Panc1 (cell line): ENCODE measurements at regions of chr3 and their contacts with region 1.

Region 1: DNA sequence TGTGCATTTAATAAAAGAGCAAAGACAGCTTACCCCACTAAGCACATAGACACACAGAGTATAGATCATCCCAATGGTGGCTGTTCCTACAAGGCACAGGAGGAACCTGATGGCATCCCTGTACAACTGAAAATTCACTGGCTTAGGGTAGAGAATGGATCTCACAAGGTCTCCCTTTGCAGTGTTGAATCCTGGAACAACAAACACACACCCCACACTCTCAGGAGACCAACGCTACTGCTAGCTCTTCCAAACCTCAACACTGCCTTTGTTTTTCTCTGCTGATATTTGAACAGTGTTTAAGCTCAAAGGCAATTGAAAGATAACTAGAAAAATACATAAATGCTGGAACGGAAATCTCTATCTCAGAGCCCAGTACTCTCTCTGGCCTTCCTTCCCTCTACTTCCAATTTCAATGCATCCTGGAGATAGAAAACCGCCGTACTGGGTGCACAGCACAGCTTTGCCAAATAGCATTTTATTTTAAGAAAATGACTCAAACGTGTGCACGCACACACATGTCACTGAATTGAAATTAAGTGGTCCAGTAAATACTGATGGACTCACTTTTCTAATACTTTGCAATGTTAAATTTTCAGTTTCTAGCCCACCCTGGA is 87.5 kb upstream of the ATP13A5 start:
- DNase-seq: no peak
- ATAC-seq: no peak
- H3K4me3 ChIP-seq: no peak overlapping the region
- H3K27ac ChIP-seq: no peak overlapping the region
- H3K4me1 ChIP-seq: no peaks in the 10 kb centered on the region
- H3K27me3 ChIP-seq: peaks cover 3% of the 10 kb centered on the region; the same call in 1 of the 2 replicates
- CTCF ChIP-seq: no peak

Region 2: DNA sequence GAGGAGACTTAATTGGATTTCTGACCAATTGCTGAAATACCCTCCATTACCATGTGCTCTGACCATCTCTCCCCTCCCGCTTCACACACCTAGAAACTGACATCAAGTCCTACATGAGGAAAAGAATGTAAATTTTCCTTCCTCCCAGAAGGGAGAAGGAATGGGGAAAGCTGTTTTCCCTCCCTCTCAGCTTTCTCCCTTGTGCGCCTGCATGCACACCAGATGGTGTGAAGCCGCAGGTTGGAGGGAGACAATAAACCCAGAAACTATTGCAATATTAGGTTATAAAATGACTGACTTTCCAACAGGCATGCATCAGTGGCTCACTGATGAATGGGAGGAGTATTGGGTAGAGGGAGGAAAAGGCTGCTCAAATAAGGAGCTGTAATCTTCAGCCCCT is 599.3 kb before region 1 on chr3:
- CTCF ChIA-PET with region 1: interaction called, 10 read pairs
- POLR2A ChIA-PET with region 1: no interaction called
- in situ Hi-C with region 1: no loop called
- intact Hi-C with region 1: no loop called
- DNase-seq: no peak
- ATAC-seq: no peak
- H3K4me3 ChIP-seq: no peak overlapping the region
- H3K27ac ChIP-seq: no peak overlapping the region
- H3K4me1 ChIP-seq: peaks cover 4% of the 10 kb centered on the region; the same call in 1 of the 2 replicates
- H3K27me3 ChIP-seq: no peaks in the 10 kb centered on the region
- CTCF ChIP-seq: no peak

Region 3: GRCh38 chr3:193214445-193214844 is 251.7 kb before region 1 on chr3:
- CTCF ChIA-PET with region 1: no interaction called
- POLR2A ChIA-PET with region 1: no interaction called
- in situ Hi-C with region 1: no loop called
- intact Hi-C with region 1: no loop called
- DNase-seq: no peak
- ATAC-seq: no peak
- H3K4me3 ChIP-seq: no peak overlapping the region
- H3K27ac ChIP-seq: no peak overlapping the region
- H3K4me1 ChIP-seq: no peaks in the 10 kb centered on the region
- H3K27me3 ChIP-seq: no peaks in the 10 kb centered on the region
- CTCF ChIP-seq: no peak

Region 4: DNA sequence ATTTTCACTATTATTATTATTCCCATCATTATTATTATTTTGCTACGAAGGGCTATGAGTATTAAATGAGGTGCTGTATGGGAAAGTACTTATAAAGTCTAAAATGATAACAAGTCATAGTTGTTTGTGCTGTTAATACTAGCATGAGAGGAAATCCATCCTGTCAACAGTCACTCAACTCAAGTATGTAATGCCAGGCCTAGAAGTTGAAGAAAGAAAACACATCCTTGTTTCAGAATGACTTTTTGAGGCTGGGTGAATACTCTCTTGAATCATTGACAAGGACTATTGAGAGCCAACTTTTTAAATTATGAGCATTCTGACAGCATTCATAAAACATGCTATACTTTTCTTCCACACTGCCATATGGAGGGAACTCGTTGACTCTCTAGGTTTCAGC is 26.7 kb before region 1 on chr3:
- CTCF ChIA-PET with region 1: interaction called, 15 read pairs
- POLR2A ChIA-PET with region 1: no interaction called
- in situ Hi-C with region 1: no loop called
- intact Hi-C with region 1: no loop called
- DNase-seq: no peak
- ATAC-seq: no peak
- H3K4me3 ChIP-seq: no peak overlapping the region
- H3K27ac ChIP-seq: no peak overlapping the region
- H3K4me1 ChIP-seq: no peaks in the 10 kb centered on the region
- H3K27me3 ChIP-seq: peaks cover 2% of the 10 kb centered on the region; the same call in 1 of the 2 replicates
- CTCF ChIP-seq: no peak

Region 5: GRCh38 chr3:193592648-193592943 is 126.5 kb after region 1 on chr3:
- CTCF ChIA-PET with region 1: interaction called, 10 read pairs
- POLR2A ChIA-PET with region 1: no interaction called
- in situ Hi-C with region 1: no loop called
- intact Hi-C with region 1: no loop called
- DNase-seq: no peak
- ATAC-seq: peak; percentile 3; the same call in 1 of the 2 replicates
- H3K4me3 ChIP-seq: peak overlapping the region; percentile 96 to 99
- H3K27ac ChIP-seq: peak overlapping the region; percentile 96
- H3K4me1 ChIP-seq: peaks cover 12% of the 10 kb centered on the region; the same call in 1 of the 2 replicates
- H3K27me3 ChIP-seq: no peaks in the 10 kb centered on the region
- CTCF ChIP-seq: no peak; the same call in 1 of the 2 replicates